Activated T-helper 1 cell treated with anti-CD3 and anti-CD28 coated beads, Interleukin-12 subunit alpha, Interleukin-12 subunit beta, Interleukin-2, Interleukin-4 antibody, amounts not matched to agents 30 ng/mL and 10 ng/mL and 1 ng/mL, durations not matched to agents 14 hours and 24 hours and 36 hours (primary cell): ENCODE measurements at regions of chr9 and their contacts with region 1.

Region 1: GRCh38 chr9:17116400-17116837 is 18.4 kb upstream of the CNTLN start:
- DNase-seq: no peak
- H3K4me3 Mint-ChIP-seq: no peak overlapping the region
- H3K27ac Mint-ChIP-seq: no peak overlapping the region
- H3K4me1 Mint-ChIP-seq: no peaks in the 10 kb centered on the region
- H3K27me3 Mint-ChIP-seq: no peaks in the 10 kb centered on the region

Region 2: DNA sequence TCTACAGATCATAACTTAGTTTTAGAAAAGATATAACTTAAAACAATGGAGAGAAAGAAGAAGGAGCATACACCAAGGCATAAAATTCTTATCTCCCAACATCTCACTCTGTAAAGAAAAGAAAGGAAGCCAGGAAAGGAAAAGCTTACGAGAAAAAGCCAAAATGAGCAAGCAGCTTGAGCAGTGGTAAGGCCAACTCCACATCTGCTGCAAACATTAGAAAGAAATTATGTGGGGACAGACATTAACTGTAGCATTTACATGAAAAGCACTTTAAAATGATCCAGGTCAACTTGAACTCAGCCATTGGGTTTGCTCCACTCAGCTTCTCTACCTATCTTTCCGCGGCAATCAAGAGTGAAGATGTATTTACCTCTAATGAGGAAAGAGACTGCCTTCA is 422.8 kb before region 1 on chr9:
- intact Hi-C with region 1: no loop called
- DNase-seq: no peak
- H3K4me3 Mint-ChIP-seq: no peak overlapping the region
- H3K27ac Mint-ChIP-seq: no peak overlapping the region
- H3K4me1 Mint-ChIP-seq: no peaks in the 10 kb centered on the region
- H3K27me3 Mint-ChIP-seq: no peaks in the 10 kb centered on the region

Region 3: GRCh38 chr9:17402309-17402708 is 285.9 kb after region 1 on chr9:
- intact Hi-C with region 1: loop called (anchors 2 kb)
- DNase-seq: no peak
- H3K4me3 Mint-ChIP-seq: no peak overlapping the region
- H3K27ac Mint-ChIP-seq: no peak overlapping the region
- H3K4me1 Mint-ChIP-seq: no peaks in the 10 kb centered on the region
- H3K27me3 Mint-ChIP-seq: no peaks in the 10 kb centered on the region